ENCODE measurements at regions of chr3 and their contacts with region 1.

Region 1: GRCh38 chr3:35383719-35384555 is 255.4 kb upstream of the ARPP21 start:
- DNase-seq: no peak
- ATAC-seq: no peak
- H3K4me3 Mint-ChIP-seq: no peak overlapping the region
- H3K27ac Mint-ChIP-seq: no peak overlapping the region
- H3K4me1 Mint-ChIP-seq: no peaks in the 10 kb centered on the region
- H3K27me3 Mint-ChIP-seq: no peaks in the 10 kb centered on the region

Region 2: GRCh38 chr3:34568766-34569165 is 815.2 kb before region 1 on chr3:
- CTCF ChIA-PET with region 1: no interaction called
- POLR2A ChIA-PET with region 1: no interaction called
- intact Hi-C with region 1: no loop called
- DNase-seq: no peak
- ATAC-seq: no peak
- H3K4me3 Mint-ChIP-seq: no peak overlapping the region
- H3K27ac Mint-ChIP-seq: no peak overlapping the region
- H3K4me1 Mint-ChIP-seq: no peaks in the 10 kb centered on the region
- H3K27me3 Mint-ChIP-seq: no peaks in the 10 kb centered on the region

Region 3: DNA sequence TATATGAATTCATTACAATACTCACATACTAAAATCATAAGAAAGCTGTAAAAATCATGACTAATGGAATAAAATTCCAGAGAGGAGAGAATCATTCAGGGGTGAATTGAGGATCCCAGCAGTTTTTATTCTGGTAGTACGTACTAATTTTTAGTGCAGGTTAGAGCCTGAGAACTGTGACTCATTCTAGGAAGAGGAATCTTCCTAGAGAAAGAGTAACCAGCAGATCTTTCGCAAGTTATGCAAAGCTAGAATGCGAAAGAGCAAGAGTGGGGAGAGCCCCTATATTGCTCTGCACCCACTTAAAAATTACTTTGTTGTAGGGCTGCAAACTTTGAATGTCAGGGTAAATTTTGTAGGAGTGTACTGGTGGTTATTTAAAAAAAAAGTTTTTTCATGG is 48.2 kb before region 1 on chr3:
- CTCF ChIA-PET with region 1: no interaction called
- POLR2A ChIA-PET with region 1: no interaction called
- intact Hi-C with region 1: no loop called
- DNase-seq: no peak
- ATAC-seq: no peak
- H3K4me3 Mint-ChIP-seq: no peak overlapping the region
- H3K27ac Mint-ChIP-seq: no peak overlapping the region
- H3K4me1 Mint-ChIP-seq: no peaks in the 10 kb centered on the region
- H3K27me3 Mint-ChIP-seq: no peaks in the 10 kb centered on the region

Region 4: GRCh38 chr3:35404571-35404970 is 20.6 kb after region 1 on chr3:
- CTCF ChIA-PET with region 1: no interaction called
- POLR2A ChIA-PET with region 1: no interaction called
- intact Hi-C with region 1: loop called in 1 of 2 experiments (anchors 2 kb)
- DNase-seq: no peak
- ATAC-seq: no peak
- H3K4me3 Mint-ChIP-seq: no peak overlapping the region
- H3K27ac Mint-ChIP-seq: no peak overlapping the region
- H3K4me1 Mint-ChIP-seq: no peaks in the 10 kb centered on the region
- H3K27me3 Mint-ChIP-seq: no peaks in the 10 kb centered on the region

Region 5: DNA sequence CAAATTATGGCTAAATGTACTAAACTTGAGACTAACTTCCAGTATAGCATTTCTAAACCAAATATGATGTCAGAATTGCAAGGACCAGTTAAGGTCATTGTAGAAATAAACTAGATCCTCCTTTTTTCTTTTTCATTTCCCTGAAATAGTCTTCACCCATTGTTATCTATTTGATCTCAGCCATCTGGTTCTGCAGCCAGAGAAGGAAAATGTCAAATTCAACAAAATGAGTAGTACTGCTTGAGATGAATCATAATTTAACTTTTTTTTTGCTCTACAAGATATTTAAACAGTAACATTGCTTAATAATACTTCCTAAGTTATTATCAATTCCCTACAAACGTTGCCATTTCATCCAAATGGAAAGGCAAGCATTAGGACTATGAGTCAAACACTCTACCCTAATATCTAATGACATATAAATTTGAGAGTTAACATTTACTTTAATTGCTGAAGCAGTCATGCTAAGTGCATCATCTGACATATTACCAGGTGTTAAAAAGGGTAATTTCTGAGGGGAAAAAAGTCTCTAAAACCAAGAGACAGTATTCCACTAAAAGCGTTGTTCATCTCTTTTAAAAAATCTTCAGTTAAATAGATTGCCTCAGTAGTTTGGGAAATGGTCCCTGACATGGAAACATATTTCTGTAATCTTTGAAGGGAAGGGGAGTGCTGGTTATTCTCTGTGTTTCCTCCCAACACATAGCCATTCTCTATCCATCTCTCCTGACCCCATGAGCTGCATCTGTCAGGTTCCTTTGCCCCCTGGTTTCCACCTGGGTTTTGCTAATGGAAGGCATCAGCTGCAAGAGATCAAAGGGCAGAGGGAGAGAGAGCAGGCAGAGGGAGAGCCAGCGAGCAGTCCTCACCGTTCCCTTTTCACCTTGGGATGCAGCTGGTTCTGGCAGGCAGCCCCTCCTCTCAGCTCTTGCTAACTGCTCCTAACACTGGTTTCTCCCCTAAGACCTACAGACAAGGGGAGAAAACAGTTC is 393.9 kb after region 1 on chr3:
- CTCF ChIA-PET with region 1: no interaction called
- POLR2A ChIA-PET with region 1: no interaction called
- intact Hi-C with region 1: no loop called
- DNase-seq: no peak
- ATAC-seq: no peak
- H3K4me3 Mint-ChIP-seq: no peak overlapping the region
- H3K27ac Mint-ChIP-seq: no peak overlapping the region
- H3K4me1 Mint-ChIP-seq: no peaks in the 10 kb centered on the region
- H3K27me3 Mint-ChIP-seq: peaks cover 2% of the 10 kb centered on the region